ENCODE measurements at regions of chr9 and their contacts with region 1.

Region 1: DNA sequence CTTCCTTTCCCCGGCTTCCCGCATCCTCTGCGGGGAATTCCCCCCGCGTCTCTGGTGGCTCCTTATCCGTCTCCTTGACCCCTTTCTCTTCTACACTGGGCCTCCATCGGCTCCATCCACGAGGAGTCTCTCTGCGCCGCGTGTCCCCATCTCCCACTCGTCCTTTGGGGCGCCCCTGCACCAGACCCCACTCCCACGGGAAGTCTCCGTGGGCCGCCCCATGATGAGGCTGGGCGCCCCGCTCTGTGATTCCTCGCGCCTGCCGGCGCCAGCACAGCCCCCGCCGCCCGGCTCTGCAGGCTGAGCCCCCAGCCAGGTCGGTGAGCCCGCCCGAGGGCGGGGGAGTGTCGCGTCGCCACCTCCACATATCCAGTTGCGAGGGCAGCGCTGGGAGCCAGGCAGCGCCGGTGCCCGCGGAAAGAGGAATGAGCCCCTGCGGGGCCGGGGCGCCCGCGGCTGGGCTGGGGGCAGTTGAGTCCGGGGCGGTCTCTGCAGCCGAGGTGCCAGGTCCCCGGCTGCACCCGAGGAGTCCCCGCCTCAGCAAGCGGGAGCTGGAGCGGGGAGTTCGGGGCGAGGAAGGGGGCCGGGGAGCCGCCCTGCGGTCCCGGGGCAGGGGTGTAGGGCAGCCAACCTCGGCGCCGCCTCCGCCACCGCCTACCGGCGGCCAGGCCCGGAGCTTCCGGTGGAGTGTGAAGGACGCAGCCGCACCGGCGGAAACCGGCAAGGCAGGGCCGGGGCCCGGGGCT is 2.1 kb upstream of the TRAF1 start:
- DNase-seq: peak; percentile 88
- ATAC-seq: peak; percentile 45
- H3K4me3 Mint-ChIP-seq: peak overlapping the region; percentile 93
- H3K27ac Mint-ChIP-seq: peak overlapping the region; percentile 94
- H3K4me1 Mint-ChIP-seq: peaks cover 69% of the 10 kb centered on the region
- H3K27me3 Mint-ChIP-seq: no peaks in the 10 kb centered on the region

Region 2: GRCh38 chr9:120792898-120793765 is 135.5 kb before region 1 on chr9 and contains the start of gene FBXW2:
- POLR2A ChIA-PET with region 1: interaction called, 11 read pairs
- DNase-seq: peak; percentile 92
- ATAC-seq: peak; percentile 90
- H3K4me3 Mint-ChIP-seq: peak within 1 kb of the TSS; percentile 92
- H3K27ac Mint-ChIP-seq: peak within 1 kb of the TSS; percentile 96
- H3K4me1 Mint-ChIP-seq: peaks cover 40% of the 10 kb centered on the region
- H3K27me3 Mint-ChIP-seq: no peaks in the 10 kb centered on the region
- total RNA-seq, gene FBXW2: 80.5 to 87.8 TPM

Region 3: GRCh38 chr9:120875954-120876841 is 52.5 kb before region 1 on chr9:
- POLR2A ChIA-PET with region 1: interaction called, 84 read pairs
- DNase-seq: peak; percentile 91
- ATAC-seq: peak; percentile 58
- H3K4me3 Mint-ChIP-seq: peak overlapping the region; percentile 91
- H3K27ac Mint-ChIP-seq: peak overlapping the region; percentile 89
- H3K4me1 Mint-ChIP-seq: peaks cover 72% of the 10 kb centered on the region
- H3K27me3 Mint-ChIP-seq: no peaks in the 10 kb centered on the region

Region 4: GRCh38 chr9:120892748-120893610 is 35.7 kb before region 1 on chr9:
- POLR2A ChIA-PET with region 1: interaction called, 117 read pairs
- DNase-seq: peak; percentile 39
- ATAC-seq: peak; percentile 44
- H3K4me3 Mint-ChIP-seq: peak overlapping the region; percentile 79
- H3K27ac Mint-ChIP-seq: peak overlapping the region; percentile 98
- H3K4me1 Mint-ChIP-seq: peaks cover 73% of the 10 kb centered on the region
- H3K27me3 Mint-ChIP-seq: no peaks in the 10 kb centered on the region

Region 5: DNA sequence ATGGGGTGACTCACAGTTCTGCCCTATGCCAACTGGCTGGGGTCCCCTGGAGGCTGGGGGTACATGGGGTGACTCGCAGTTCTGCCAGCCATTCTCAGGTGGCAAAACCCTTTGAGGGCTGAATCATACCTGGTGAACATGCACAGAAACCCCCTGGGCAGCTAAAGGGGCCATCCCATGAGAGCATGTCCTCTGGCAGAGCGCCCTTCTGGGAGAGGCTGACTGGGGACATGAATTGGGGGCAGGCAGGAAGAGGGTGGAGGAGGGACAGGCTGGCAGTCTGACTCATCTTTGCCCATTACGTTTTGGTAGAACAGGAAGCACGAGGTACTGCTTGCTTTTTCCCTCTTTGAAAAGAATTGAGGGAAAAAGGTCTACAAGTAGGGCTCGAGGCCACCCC is 18.8 kb before region 1 on chr9:
- POLR2A ChIA-PET with region 1: interaction called, 94 read pairs
- DNase-seq: no peak
- ATAC-seq: peak; percentile 32
- H3K4me3 Mint-ChIP-seq: peak overlapping the region; percentile 30
- H3K27ac Mint-ChIP-seq: peak overlapping the region; percentile 82
- H3K4me1 Mint-ChIP-seq: peaks cover 65% of the 10 kb centered on the region
- H3K27me3 Mint-ChIP-seq: no peaks in the 10 kb centered on the region

Measured in activated naive CD8-positive, alpha-beta T cell treated with anti-CD3 and anti-CD28 coated beads, Interleukin-2, amount 10 ng/mL, durations not matched to agents 7 days and 5 days (primary cell).